Caco-2 (cell line): ENCODE measurements at regions of chr11 and their contacts with region 1.

Region 1: GRCh38 chr11:10933455-10934292 is 75.8 kb upstream of the ZBED5 start:
- DNase-seq: peak; percentile 92 to 95
- H3K4me3 ChIP-seq: peak overlapping the region; percentile 27
- H3K4me3 Mint-ChIP-seq: peak overlapping the region; percentile 85
- H3K27ac Mint-ChIP-seq: peak overlapping the region; percentile 64
- H3K4me1 ChIP-seq: peaks cover 16% of the 10 kb centered on the region
- H3K4me1 Mint-ChIP-seq: peaks cover 22% of the 10 kb centered on the region
- H3K27me3 ChIP-seq: no peaks in the 10 kb centered on the region
- H3K27me3 Mint-ChIP-seq: no peaks in the 10 kb centered on the region
- CTCF ChIP-seq: peak; percentile 93 to 97

Region 2: DNA sequence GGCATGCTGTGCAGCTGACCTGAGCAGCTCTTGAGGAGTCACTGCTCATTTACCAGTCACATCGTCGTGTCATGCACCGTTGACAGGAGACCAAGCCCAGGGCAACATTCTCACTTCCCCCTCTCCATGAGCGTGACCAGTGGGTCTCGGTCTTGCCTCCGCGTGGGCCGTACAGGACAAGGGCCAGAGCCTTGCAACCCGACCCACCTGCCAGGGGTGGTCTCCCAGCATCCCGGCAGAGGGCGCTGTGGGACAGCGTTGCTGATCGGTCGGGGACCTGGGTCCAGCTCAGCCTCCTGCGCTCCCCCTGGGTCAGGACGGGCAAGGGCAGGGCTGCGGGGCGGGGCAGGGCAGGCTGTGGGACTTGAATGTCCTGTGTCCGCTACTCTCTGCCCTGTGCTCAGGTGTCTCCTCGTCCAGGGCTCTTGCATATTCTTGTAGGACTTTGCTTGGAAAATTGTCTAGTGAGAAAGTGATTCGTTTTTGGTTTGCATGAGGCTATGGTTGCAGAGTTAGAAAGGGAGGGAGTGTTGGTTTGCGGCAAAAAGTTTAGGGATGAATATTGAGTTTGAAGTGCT is 141.2 kb before region 1 on chr11:
- CTCF ChIA-PET with region 1: interaction called, 35 read pairs
- POLR2A ChIA-PET with region 1: interaction called, 4 read pairs
- intact Hi-C with region 1: loop called (anchors 1 kb)
- DNase-seq: peak; percentile 93 to 96
- H3K4me3 ChIP-seq: no peak overlapping the region
- H3K4me3 Mint-ChIP-seq: peak overlapping the region; percentile 10
- H3K27ac Mint-ChIP-seq: no peak overlapping the region
- H3K4me1 ChIP-seq: no peaks in the 10 kb centered on the region
- H3K4me1 Mint-ChIP-seq: peaks cover 6% of the 10 kb centered on the region
- H3K27me3 ChIP-seq: no peaks in the 10 kb centered on the region
- H3K27me3 Mint-ChIP-seq: no peaks in the 10 kb centered on the region
- CTCF ChIP-seq: peak; percentile 94 to 99

Region 3: DNA sequence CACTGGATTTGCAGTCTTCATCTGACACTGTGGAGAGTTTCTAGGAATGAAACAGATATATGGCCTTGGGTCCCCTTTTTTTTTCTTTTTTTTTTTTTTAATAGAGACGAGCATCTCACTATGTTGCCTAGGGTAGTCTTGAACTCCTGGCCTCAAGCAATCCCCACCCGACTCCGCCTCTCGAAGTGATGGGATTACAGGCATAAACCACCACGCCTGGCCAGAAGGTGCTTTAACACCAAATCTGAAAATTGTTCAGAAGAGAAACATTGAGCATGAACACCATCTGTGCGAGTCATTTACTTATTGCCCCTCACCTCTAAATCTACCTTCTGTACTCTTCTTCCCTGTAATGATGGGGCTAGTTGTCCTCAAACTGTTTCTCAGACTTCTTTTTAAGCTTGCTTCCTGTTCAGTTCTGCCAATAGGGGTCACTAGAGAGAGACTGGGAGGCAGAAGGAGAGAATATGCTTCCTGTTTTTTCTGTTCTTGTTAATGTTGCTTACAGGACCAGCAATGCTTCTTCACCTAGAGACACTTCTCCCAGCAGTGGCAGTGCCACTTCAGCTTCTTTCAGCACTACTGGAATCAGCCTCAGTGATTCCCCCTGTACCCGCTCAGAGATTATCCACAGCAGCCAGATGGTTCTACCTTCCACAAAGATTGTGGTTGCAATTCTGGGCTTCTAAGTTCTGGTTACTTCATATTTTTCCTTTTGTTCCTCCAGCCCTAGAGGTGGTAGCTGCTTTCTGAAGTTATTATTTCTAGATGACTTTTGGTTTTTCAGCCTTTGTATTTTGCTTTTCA is 55.1 kb before region 1 on chr11:
- CTCF ChIA-PET with region 1: interaction called, 7 read pairs
- POLR2A ChIA-PET with region 1: no interaction called
- intact Hi-C with region 1: loop called (anchors 2 kb)
- DNase-seq: peak in 1 of 2 experiments; percentile 75
- H3K4me3 ChIP-seq: no peak overlapping the region
- H3K4me3 Mint-ChIP-seq: no peak overlapping the region
- H3K27ac Mint-ChIP-seq: no peak overlapping the region
- H3K4me1 ChIP-seq: no peaks in the 10 kb centered on the region
- H3K4me1 Mint-ChIP-seq: peaks cover 7% of the 10 kb centered on the region
- H3K27me3 ChIP-seq: no peaks in the 10 kb centered on the region
- H3K27me3 Mint-ChIP-seq: no peaks in the 10 kb centered on the region
- CTCF ChIP-seq: peak; percentile 77 to 86

Region 4: GRCh38 chr11:10943968-10944367 is 10.3 kb after region 1 on chr11:
- CTCF ChIA-PET with region 1: interaction called, 31 read pairs
- POLR2A ChIA-PET with region 1: no interaction called
- intact Hi-C with region 1: loop called (anchors 1 kb)
- DNase-seq: no peak
- H3K4me3 ChIP-seq: no peak overlapping the region
- H3K4me3 Mint-ChIP-seq: no peak overlapping the region
- H3K27ac Mint-ChIP-seq: peak overlapping the region; percentile 40
- H3K4me1 ChIP-seq: peaks cover 16% of the 10 kb centered on the region
- H3K4me1 Mint-ChIP-seq: peaks cover 14% of the 10 kb centered on the region
- H3K27me3 ChIP-seq: no peaks in the 10 kb centered on the region
- H3K27me3 Mint-ChIP-seq: no peaks in the 10 kb centered on the region
- CTCF ChIP-seq: no peak

Region 5: GRCh38 chr11:11016068-11016467 is 82.4 kb after region 1 on chr11:
- CTCF ChIA-PET with region 1: interaction called, 133 read pairs
- POLR2A ChIA-PET with region 1: interaction called, 6 read pairs
- intact Hi-C with region 1: no loop called
- DNase-seq: peak; percentile 32 to 57
- H3K4me3 ChIP-seq: no peak overlapping the region
- H3K4me3 Mint-ChIP-seq: no peak overlapping the region
- H3K27ac Mint-ChIP-seq: no peak overlapping the region
- H3K4me1 ChIP-seq: peaks cover 22% of the 10 kb centered on the region
- H3K4me1 Mint-ChIP-seq: peaks cover 29% of the 10 kb centered on the region
- H3K27me3 ChIP-seq: no peaks in the 10 kb centered on the region
- H3K27me3 Mint-ChIP-seq: no peaks in the 10 kb centered on the region
- CTCF ChIP-seq: no peak

Region 6: DNA sequence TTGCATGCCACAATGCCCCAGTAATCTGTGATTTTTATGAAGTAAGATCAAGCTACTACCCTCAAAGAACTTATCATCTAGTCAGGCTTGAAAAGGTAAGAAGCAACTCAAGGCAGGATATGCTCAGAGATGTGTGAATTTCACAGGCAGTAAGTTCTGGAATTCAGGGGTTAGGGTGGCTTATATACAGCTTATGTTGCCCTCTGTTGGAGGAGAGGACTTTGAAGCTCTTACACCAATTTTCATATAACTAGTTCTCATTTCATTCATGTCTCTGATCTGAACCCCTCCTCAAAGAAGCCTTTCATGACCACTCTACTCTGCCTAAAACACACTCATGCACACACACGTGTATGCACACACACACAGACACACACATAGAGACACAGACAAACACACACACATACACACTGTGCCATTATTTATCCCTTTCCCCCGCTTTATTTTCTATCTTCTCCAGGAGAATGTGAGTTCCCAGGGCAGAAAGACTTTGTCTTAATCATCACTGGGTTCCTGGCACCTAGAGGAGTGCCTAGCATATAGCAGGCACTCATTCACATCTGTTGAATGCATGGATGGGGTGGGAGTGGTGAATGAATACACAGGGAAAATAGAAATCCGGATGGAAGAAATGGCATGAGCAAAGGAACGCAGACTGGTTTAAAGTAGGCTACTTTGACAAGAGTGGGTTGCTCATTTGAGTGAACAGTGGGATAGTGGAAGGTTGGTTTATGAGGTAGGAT is 144.8 kb after region 1 on chr11:
- CTCF ChIA-PET with region 1: interaction called, 9 read pairs
- POLR2A ChIA-PET with region 1: no interaction called
- intact Hi-C with region 1: loop called (anchors 1 kb)
- DNase-seq: no peak
- H3K4me3 ChIP-seq: no peak overlapping the region
- H3K4me3 Mint-ChIP-seq: no peak overlapping the region
- H3K27ac Mint-ChIP-seq: no peak overlapping the region
- H3K4me1 ChIP-seq: no peaks in the 10 kb centered on the region
- H3K4me1 Mint-ChIP-seq: peaks cover under 1% of the 10 kb centered on the region
- H3K27me3 ChIP-seq: no peaks in the 10 kb centered on the region; the same call in 1 of the 2 replicates
- H3K27me3 Mint-ChIP-seq: peaks cover 14% of the 10 kb centered on the region
- CTCF ChIP-seq: no peak

Region 7: GRCh38 chr11:11451501-11452005 is 517.9 kb after region 1 on chr11:
- CTCF ChIA-PET with region 1: interaction called, 3 read pairs
- POLR2A ChIA-PET with region 1: no interaction called
- intact Hi-C with region 1: loop called (anchors 10 kb)
- DNase-seq: peak; percentile 51 to 65
- H3K4me3 ChIP-seq: no peak overlapping the region
- H3K4me3 Mint-ChIP-seq: peak overlapping the region; percentile 17
- H3K27ac Mint-ChIP-seq: no peak overlapping the region
- H3K4me1 ChIP-seq: peaks cover 18% of the 10 kb centered on the region
- H3K4me1 Mint-ChIP-seq: peaks cover 12% of the 10 kb centered on the region
- H3K27me3 ChIP-seq: no peaks in the 10 kb centered on the region; the same call in 1 of the 2 replicates
- H3K27me3 Mint-ChIP-seq: peaks cover 3% of the 10 kb centered on the region
- CTCF ChIP-seq: peak in 1 of 2 experiments; percentile 21